Endothelial cell of umbilical vein (primary cell): ENCODE measurements at regions of chr7 and their contacts with region 1.

Region 1: GRCh38 chr7:13990984-13991790 is 1.7 kb upstream of the ETV1 start:
- DNase-seq: peak; percentile 98
- H3K4me3 ChIP-seq: peak overlapping the region; percentile 79 to 98 (median 96)
- H3K27ac ChIP-seq: peak overlapping the region; percentile 88
- H3K4me1 ChIP-seq: peaks cover 16% of the 10 kb centered on the region
- H3K27me3 ChIP-seq: no peaks in the 10 kb centered on the region
- CTCF ChIP-seq: no peak
- POLR2A ChIP-seq: no peak

Region 2: GRCh38 chr7:13524076-13524475 is 467.1 kb before region 1 on chr7:
- CTCF ChIA-PET with region 1: no interaction called
- POLR2A ChIA-PET with region 1: no interaction called
- dilution Hi-C with region 1: no loop called
- intact Hi-C with region 1: loop called (anchors 10 kb)
- DNase-seq: no peak
- H3K4me3 ChIP-seq: no peak overlapping the region
- H3K27ac ChIP-seq: no peak overlapping the region
- H3K4me1 ChIP-seq: no peaks in the 10 kb centered on the region
- H3K27me3 ChIP-seq: no peaks in the 10 kb centered on the region
- CTCF ChIP-seq: no peak
- POLR2A ChIP-seq: no peak

Region 3: DNA sequence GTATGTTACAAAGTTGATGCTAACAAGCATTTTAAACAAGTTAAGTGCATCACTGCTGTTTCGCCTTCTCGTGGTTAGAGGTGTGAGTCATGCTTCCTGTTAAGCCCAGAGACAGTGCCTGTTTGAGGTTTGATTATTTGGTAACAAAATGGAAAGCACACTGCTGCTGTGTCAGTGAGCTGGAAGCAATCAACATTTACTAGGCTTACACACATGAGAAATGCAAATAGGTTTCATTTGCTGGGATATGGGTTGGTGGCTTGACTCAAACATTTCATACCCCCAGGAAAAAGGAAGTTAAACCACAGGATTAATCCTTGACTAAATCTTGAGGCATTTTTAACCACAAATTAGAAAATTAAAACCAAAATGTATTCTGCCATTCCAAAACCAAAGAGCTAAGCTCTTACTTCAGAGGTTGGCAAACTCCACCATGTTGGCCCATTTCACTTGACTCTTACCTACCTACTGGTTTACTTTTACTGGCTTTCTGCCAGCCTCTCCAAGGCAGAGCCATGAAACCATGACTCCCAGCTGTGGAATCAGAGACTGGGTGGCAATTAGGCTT is 140.9 kb before region 1 on chr7:
- CTCF ChIA-PET with region 1: interaction called, 3 read pairs
- POLR2A ChIA-PET with region 1: no interaction called
- dilution Hi-C with region 1: no loop called
- intact Hi-C with region 1: loop called (anchors 1 kb)
- DNase-seq: peak; percentile 82
- H3K4me3 ChIP-seq: no peak overlapping the region
- H3K27ac ChIP-seq: peak overlapping the region; percentile 75
- H3K4me1 ChIP-seq: peaks cover 11% of the 10 kb centered on the region
- H3K27me3 ChIP-seq: no peaks in the 10 kb centered on the region
- CTCF ChIP-seq: no peak
- POLR2A ChIP-seq: no peak

Region 4: DNA sequence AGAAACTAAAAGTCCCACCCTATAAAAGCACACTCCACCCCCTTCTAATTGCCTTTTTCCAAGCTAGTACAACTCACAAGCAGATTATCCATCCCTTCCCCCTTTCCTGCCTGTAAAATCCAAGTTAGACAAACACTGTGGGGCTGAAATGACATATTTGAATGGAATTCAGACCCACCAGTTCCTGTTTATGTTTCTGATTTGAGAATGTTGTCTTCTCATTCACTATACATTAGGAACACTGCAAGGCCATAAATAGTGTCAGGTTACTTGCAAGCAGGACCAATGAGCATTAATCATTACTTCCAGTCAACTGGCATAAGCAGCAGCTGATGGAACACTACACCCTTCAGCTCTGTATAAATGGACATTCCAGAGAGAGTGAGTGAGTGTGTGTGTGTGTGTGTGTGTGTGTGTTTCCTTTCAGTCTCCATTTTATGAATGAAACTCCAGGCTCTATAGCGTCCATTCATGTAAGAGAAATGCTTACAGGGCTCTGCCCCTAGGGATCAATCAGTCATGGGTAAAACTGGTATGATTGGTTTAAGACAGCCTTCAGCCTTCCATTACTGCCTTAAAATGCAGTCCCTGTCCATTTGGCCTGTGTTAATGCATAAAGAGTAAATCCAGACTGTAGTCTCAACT is 71.0 kb before region 1 on chr7:
- CTCF ChIA-PET with region 1: interaction called, 7 read pairs
- POLR2A ChIA-PET with region 1: interaction called, 10 read pairs
- dilution Hi-C with region 1: no loop called
- intact Hi-C with region 1: loop called (anchors 1 kb)
- DNase-seq: peak; percentile 99
- H3K4me3 ChIP-seq: peak overlapping the region in 2 of 3 experiments; percentile 19 to 67
- H3K27ac ChIP-seq: peak overlapping the region; percentile 99
- H3K4me1 ChIP-seq: peaks cover 21% of the 10 kb centered on the region
- H3K27me3 ChIP-seq: no peaks in the 10 kb centered on the region
- CTCF ChIP-seq: no peak
- POLR2A ChIP-seq: no peak

Region 5: DNA sequence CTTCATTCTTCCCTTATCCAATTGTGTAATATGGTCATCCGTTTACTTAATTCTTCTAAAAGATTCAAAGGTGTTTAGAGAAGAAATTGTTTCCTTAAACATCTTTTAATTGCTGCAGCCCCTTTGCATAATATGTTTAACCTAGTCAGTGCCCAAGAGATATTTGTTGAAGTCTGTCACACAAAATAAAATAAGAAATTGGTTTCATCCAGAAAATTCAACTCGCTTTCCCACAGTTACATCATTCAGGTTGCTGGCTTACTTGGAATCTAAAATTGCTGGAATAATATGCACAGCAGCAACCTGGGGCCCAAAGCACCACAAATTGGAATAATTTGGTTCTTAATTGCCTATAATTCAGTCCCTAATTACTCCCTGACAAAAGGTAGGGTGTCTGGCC is 153.4 kb after region 1 on chr7:
- CTCF ChIA-PET with region 1: no interaction called
- POLR2A ChIA-PET with region 1: no interaction called
- dilution Hi-C with region 1: no loop called
- intact Hi-C with region 1: no loop called
- DNase-seq: no peak
- H3K4me3 ChIP-seq: no peak overlapping the region
- H3K27ac ChIP-seq: no peak overlapping the region
- H3K4me1 ChIP-seq: no peaks in the 10 kb centered on the region
- H3K27me3 ChIP-seq: no peaks in the 10 kb centered on the region
- CTCF ChIP-seq: no peak
- POLR2A ChIP-seq: no peak

Region 6: GRCh38 chr7:14236834-14237233 is 245.6 kb after region 1 on chr7:
- CTCF ChIA-PET with region 1: no interaction called
- POLR2A ChIA-PET with region 1: no interaction called
- dilution Hi-C with region 1: no loop called
- intact Hi-C with region 1: no loop called
- DNase-seq: no peak
- H3K4me3 ChIP-seq: no peak overlapping the region
- H3K27ac ChIP-seq: no peak overlapping the region
- H3K4me1 ChIP-seq: no peaks in the 10 kb centered on the region
- H3K27me3 ChIP-seq: no peaks in the 10 kb centered on the region
- CTCF ChIP-seq: no peak
- POLR2A ChIP-seq: no peak

Region 7: GRCh38 chr7:14457568-14458453 is 466.6 kb after region 1 on chr7:
- CTCF ChIA-PET with region 1: no interaction called
- POLR2A ChIA-PET with region 1: no interaction called
- dilution Hi-C with region 1: no loop called
- intact Hi-C with region 1: loop called (anchors 1 kb)
- DNase-seq: peak; percentile 79
- H3K4me3 ChIP-seq: no peak overlapping the region
- H3K27ac ChIP-seq: no peak overlapping the region
- H3K4me1 ChIP-seq: no peaks in the 10 kb centered on the region
- H3K27me3 ChIP-seq: no peaks in the 10 kb centered on the region
- CTCF ChIP-seq: peak; percentile 71 to 73
- POLR2A ChIP-seq: no peak